Natural killer cell (primary cell): ENCODE measurements at regions of chr17 and their contacts with region 1.

Region 1: GRCh38 chr17:75109407-75110233 is at the start of gene ARMC7:
- DNase-seq: peak; percentile 89 to 94
- ATAC-seq: peak; percentile 82 to 89 (median 83)
- H3K4me3 ChIP-seq: peak within 1 kb of the TSS; percentile 93
- H3K4me3 Mint-ChIP-seq: peak within 1 kb of the TSS; percentile 89
- H3K27ac ChIP-seq: peak within 1 kb of the TSS; percentile 65
- H3K27ac Mint-ChIP-seq: peak within 1 kb of the TSS; percentile 74 to 79
- H3K4me1 ChIP-seq: peaks cover 36% of the 10 kb centered on the region
- H3K4me1 Mint-ChIP-seq: peaks cover 30 to 35% of the 10 kb centered on the region in 2 donors
- H3K27me3 ChIP-seq: no peaks in the 10 kb centered on the region
- H3K27me3 Mint-ChIP-seq: no peaks in the 10 kb centered on the region
- CTCF ChIP-seq: no peak
- total RNA-seq, gene ARMC7: 9.3 to 18.6 (median 11.3) TPM

Region 2: GRCh38 chr17:74945543-74945942 is 164.1 kb before region 1 on chr17:
- intact Hi-C with region 1: no loop called
- DNase-seq: no peak
- ATAC-seq: no peak
- H3K4me3 ChIP-seq: no peak overlapping the region
- H3K4me3 Mint-ChIP-seq: no peak overlapping the region
- H3K27ac ChIP-seq: no peak overlapping the region
- H3K27ac Mint-ChIP-seq: no peak overlapping the region
- H3K4me1 ChIP-seq: no peaks in the 10 kb centered on the region
- H3K4me1 Mint-ChIP-seq: no peaks in the 10 kb centered on the region
- H3K27me3 ChIP-seq: peaks cover 3% of the 10 kb centered on the region
- H3K27me3 Mint-ChIP-seq: peaks cover 6 to 16% of the 10 kb centered on the region in 2 donors
- CTCF ChIP-seq: no peak

Region 3: DNA sequence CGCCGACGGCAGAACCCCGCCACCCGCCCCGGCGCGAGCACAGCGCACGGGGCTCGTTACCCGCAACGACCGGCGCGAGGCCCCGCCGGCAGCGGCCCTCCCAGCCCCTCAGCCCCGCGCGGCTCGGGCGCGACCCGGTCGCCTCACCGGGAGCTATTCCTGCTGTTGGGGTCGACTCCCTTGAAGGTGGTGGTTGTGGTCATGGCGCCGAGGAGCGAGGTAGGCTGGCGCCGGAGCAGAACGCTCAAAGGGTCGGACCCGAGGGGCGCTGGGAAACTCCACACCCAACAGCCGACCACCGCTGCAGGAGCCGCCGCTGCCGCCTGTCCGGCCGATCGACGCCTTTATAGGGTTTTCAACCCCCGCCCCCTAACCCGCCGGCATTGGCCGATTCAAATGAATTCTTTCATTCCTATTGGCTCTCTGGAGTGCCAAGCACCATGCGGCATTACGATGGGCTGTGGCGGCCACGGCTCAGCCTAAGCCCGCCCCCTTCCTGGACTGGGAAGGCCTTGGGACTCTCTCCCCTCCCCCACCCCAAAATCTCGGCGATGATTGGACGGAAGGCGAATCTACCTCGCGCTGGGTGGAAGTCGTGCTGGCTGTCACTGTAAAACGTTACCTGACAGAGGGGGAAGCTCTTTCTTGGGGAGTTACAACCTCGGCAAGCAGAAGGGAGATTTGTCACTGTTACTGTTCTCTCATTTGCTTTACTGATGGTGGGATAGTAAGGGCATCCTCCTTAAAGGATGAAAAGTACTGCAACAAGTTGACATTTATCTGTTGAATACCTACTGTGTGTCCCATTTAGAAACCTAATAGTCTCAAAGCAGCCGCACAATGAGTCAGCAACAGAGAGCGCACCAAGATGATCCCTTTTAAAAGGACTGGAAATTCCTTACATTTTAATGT is 44.8 kb after region 1 on chr17 and contains the start of gene JPT1:
- intact Hi-C with region 1: loop called (anchors 5 kb)
- DNase-seq: peak; percentile 87 to 99
- ATAC-seq: peak; percentile 97 to 99 (median 98)
- H3K4me3 ChIP-seq: peak within 1 kb of the TSS; percentile 90
- H3K4me3 Mint-ChIP-seq: peak within 1 kb of the TSS; percentile 95
- H3K27ac ChIP-seq: peak within 1 kb of the TSS; percentile 62
- H3K27ac Mint-ChIP-seq: peak within 1 kb of the TSS; percentile 85 to 89
- H3K4me1 ChIP-seq: peaks cover 21% of the 10 kb centered on the region
- H3K4me1 Mint-ChIP-seq: peaks cover 27 to 37% of the 10 kb centered on the region in 2 donors
- H3K27me3 ChIP-seq: no peaks in the 10 kb centered on the region
- H3K27me3 Mint-ChIP-seq: no peaks in the 10 kb centered on the region
- CTCF ChIP-seq: no peak
- total RNA-seq, gene JPT1: 45.0 to 54.8 (median 50.5) TPM

Region 4: GRCh38 chr17:75182569-75183450 is 73.2 kb after region 1 on chr17 and contains the start of gene SUMO2:
- intact Hi-C with region 1: loop called (anchors 5 kb)
- DNase-seq: peak; percentile 97 to 98
- ATAC-seq: peak; percentile 81 to 94 (median 83)
- H3K4me3 ChIP-seq: peak within 1 kb of the TSS; percentile 83
- H3K4me3 Mint-ChIP-seq: peak within 1 kb of the TSS; percentile 95
- H3K27ac ChIP-seq: peak within 1 kb of the TSS; percentile 97
- H3K27ac Mint-ChIP-seq: peak within 1 kb of the TSS; percentile 84 to 97
- H3K4me1 ChIP-seq: peaks cover 17% of the 10 kb centered on the region
- H3K4me1 Mint-ChIP-seq: peaks cover 27 to 31% of the 10 kb centered on the region in 2 donors
- H3K27me3 ChIP-seq: no peaks in the 10 kb centered on the region
- H3K27me3 Mint-ChIP-seq: no peaks in the 10 kb centered on the region
- CTCF ChIP-seq: peak; percentile 1
- total RNA-seq, gene SUMO2: 240 to 294 (median 250) TPM

Region 5: GRCh38 chr17:75238684-75239191 is 129.1 kb after region 1 on chr17:
- intact Hi-C with region 1: loop called (anchors 1 kb)
- DNase-seq: peak; percentile 55 to 83
- ATAC-seq: peak; percentile 76 to 91 (median 81)
- H3K4me3 ChIP-seq: no peak overlapping the region
- H3K4me3 Mint-ChIP-seq: peak overlapping the region; percentile 22
- H3K27ac ChIP-seq: no peak overlapping the region
- H3K27ac Mint-ChIP-seq: peak overlapping the region; percentile 77 to 78
- H3K4me1 ChIP-seq: peaks cover 31% of the 10 kb centered on the region
- H3K4me1 Mint-ChIP-seq: peaks cover 5 to 12% of the 10 kb centered on the region in 2 donors
- H3K27me3 ChIP-seq: no peaks in the 10 kb centered on the region
- H3K27me3 Mint-ChIP-seq: no peaks in the 10 kb centered on the region
- CTCF ChIP-seq: peak; percentile 70